AG04450 (cell line): ENCODE measurements at regions of chr5 and their contacts with region 1.

Region 1: DNA sequence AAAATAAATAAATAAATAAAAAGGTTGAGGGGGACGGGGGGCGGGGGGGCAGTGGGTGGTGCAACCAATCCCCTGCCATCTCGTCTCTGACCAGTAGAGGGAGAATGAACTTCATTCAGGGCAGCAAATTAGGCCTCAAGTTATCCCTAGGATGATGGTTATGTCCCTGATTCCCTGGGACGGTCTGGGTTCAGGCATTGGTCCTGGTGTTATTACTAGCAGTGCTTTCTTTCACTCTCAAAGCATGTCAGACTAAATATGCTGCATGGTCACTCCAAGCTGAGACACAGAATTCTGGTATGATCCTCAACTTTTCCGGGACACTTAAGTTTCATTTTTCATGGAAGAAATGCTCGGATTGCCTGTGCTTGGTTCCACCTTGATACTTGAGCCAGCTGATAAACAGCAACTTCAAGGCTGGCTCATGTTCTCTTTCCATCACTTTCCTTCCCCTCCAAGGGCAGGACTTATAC is 59.4 kb downstream of the DAP start:
- DNase-seq: no peak
- H3K4me3 ChIP-seq: no peak overlapping the region
- H3K27ac ChIP-seq: peak overlapping the region; percentile 98
- H3K27me3 ChIP-seq: no peaks in the 10 kb centered on the region
- CTCF ChIP-seq: peak; percentile 55

Region 2: DNA sequence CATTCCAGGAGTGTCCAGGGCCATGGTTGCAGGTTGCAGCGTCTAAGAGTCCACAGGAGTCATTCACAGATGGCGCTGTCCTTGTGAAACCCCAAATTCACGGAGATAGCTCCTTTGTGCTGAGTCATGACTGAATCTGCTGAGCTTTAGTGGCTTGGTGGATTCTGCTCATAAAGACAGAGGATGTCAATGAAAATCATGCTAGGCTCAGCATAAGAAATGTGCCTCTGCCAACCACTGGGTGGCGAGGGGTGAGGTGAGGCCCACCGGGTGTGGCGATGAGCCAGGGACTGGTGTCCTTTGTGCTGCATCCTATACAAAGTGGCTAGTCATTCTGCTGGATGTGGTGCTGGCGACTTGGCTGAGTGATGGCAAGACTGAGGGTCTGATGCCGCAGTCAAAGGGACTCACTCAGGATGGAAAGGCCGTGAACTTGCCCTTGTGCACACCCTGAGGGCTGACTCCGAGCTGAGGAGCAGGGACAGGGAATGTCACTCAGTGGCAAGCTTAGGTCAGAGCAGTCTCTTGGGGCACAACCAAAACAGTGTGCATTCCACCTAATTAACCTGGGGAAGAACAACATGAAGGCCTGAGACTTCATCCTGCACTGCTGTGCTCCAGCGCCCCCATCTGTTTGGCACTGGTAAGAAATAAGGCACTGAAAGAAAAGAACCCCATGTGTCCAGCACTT is 12.1 kb before region 1 on chr5:
- CTCF ChIA-PET with region 1: interaction called, 19 read pairs
- POLR2A ChIA-PET with region 1: interaction called, 8 read pairs
- DNase-seq: no peak
- H3K4me3 ChIP-seq: no peak overlapping the region
- H3K27ac ChIP-seq: no peak overlapping the region
- H3K27me3 ChIP-seq: no peaks in the 10 kb centered on the region
- CTCF ChIP-seq: peak; percentile 37

Region 3: GRCh38 chr5:10724799-10725507 is 23.4 kb after region 1 on chr5:
- CTCF ChIA-PET with region 1: interaction called, 7 read pairs
- POLR2A ChIA-PET with region 1: interaction called, 10 read pairs
- DNase-seq: peak; percentile 68
- H3K4me3 ChIP-seq: no peak overlapping the region; the same call in 1 of the 2 replicates
- H3K27ac ChIP-seq: peak overlapping the region; percentile 89
- H3K27me3 ChIP-seq: no peaks in the 10 kb centered on the region
- CTCF ChIP-seq: peak; percentile 37

Region 4: DNA sequence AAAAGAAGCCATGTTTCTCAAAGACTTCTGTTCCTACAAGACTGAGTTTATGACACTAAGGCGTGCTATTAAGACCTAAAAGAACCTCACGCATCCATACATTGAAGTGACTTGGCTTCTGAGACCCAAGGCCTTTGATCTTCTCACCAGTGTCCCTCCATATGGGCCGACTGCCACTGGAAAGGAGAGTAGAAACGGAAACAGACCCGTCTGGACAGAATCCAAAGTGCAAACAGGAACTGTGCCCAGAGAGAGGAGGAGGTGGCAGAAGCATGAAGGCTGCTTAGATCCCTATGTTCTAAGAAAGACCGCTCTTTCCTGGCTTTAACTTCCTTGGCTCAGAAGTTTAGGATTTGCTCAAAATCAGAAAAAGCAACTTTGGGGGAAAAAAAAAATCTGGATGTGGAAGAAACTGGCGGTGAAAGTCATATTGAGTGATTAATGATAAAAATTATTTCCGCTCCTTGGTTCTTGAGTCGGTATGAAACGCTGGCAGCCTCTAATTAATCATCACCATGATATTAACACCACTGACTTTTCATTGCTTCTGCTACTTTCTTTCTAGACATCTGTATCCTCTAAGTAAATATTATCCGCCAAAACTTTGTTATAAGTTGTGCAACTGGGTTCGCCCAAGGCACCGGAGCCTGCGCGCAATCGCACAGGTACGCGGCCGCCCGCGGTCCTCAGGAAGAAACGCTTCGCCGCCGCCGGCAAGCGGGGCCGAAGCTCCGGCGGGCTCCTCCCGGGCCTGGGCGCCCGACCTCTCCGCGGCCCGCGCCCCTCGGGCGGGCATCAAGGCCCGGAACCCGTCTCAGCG is 58.7 kb after region 1 on chr5:
- CTCF ChIA-PET with region 1: interaction called, 5 read pairs
- POLR2A ChIA-PET with region 1: interaction called, 11 read pairs
- DNase-seq: no peak
- H3K4me3 ChIP-seq: peak overlapping the region; percentile 71
- H3K27ac ChIP-seq: peak overlapping the region; percentile 75
- H3K27me3 ChIP-seq: no peaks in the 10 kb centered on the region
- CTCF ChIP-seq: no peak